Right ventricle myocardium superior (tissue), 1 donor: ENCODE measurements at regions of chr20 and their contacts with region 1.

Region 1: DNA sequence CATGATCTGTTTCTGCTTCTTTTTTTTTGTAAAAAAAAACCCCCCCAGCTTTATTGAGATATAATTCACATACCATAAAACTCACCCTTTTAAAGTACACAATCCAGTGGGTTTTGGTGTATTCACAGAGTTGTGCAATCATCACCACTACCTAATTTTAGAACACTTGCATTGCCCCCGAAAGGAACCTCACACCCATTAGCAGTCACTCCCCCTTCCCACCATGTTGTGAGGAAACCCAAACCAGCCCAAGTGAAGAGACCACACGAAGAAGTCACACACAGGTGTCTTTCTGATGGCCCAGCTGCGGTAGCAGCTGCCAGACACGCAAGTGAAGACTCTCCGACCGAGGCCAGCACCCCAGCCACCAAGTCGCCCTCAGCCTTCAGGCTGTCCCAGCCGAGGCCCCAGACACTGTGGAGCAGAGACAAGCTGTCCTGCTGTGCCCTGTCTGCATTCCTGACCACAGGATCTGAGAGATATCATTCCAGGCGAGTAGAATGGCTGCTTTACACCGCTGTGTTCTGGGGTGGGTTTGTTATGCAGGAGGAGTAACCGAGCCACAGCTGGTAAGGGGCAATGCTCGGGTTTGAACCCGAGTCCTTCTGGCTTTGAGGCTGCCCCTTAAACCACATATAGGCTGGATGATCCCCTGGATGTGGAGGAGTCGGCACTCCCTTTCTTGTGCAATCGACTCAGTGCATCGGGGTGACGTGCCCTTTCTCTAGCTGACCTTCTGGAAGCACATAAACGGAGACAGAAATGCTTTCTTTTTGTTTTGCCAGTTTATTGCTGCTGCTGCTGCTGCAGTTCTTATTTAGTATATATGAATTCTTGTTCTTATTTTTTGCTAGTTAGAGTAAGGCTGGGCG is 59.1 kb upstream of the PTPN1 start:
- DNase-seq: peak; percentile 57
- ATAC-seq: peak; percentile 74

Region 2: GRCh38 chr20:50308513-50309279 is 142.4 kb before region 1 on chr20:
- intact Hi-C with region 1: loop called (anchors 10 kb)
- DNase-seq: peak; percentile 94
- ATAC-seq: peak; percentile 72

Region 3: DNA sequence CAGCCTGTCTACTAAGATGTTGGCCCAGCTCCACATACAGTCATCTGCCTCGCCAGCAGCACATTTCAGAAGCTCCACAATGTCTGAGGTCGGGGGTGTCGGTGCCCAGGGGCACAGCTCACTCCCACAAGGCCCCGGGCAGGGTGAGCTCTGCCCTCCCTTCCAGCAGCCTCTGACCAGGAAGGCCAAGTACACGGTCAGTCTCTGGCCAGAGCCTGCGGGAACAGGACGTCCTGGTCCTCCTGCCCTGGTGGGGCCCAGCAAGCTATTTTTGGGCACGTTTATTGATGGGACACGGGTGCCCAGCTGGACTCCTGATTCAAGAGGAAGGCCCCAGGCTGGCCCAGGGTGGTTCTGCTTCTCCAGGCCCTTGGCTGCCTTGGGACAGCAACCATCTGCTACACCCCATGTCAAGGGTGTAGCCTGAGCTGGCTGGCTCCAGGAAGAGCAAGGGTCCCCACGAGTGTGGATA is 55.8 kb before region 1 on chr20:
- intact Hi-C with region 1: no loop called
- DNase-seq: peak; percentile 92
- ATAC-seq: peak; percentile 82

Region 4: DNA sequence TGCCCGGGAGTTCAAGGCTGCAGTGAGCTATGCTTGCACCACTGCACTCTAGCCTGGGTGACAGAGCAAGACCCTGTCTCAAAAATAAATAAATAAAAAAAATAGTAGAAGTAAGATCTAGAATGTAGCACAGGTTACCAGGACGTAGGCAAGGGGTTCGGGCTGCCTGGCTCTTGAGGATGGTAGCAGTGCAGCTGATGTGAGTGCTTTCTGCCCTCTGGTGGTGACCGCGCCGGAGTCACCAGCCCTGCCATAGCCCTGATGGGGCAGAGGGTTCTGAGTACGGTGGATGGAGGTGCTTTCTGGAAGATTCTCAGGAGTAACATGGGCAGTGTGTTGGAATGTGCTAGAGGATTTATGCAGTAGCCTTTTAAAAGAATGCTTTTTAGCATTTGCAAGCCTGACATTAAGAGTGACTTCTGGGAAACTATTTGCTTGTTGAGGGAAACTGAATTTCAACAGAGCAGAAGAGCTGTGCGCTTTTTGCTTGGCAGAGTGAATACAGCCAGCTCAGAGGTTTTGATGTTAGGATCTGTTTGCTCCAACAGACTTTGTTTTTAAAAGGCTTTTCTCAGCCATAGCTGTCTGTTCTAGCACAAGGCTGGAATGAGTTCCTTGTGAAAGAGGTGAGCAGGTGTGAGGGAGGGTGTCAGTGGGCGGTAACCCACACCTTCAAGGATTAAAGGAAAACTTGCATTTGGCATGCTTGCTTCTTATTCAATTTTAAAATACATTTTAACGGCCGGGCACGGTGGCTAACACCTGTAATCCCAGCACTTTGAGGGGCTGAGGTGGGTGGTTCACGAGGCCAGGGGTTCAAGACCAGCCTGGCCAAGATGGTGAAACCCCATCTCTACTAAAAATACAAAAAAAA is 125.0 kb after region 1 on chr20:
- intact Hi-C with region 1: no loop called
- DNase-seq: peak; percentile 82
- ATAC-seq: peak; percentile 64

Region 5: DNA sequence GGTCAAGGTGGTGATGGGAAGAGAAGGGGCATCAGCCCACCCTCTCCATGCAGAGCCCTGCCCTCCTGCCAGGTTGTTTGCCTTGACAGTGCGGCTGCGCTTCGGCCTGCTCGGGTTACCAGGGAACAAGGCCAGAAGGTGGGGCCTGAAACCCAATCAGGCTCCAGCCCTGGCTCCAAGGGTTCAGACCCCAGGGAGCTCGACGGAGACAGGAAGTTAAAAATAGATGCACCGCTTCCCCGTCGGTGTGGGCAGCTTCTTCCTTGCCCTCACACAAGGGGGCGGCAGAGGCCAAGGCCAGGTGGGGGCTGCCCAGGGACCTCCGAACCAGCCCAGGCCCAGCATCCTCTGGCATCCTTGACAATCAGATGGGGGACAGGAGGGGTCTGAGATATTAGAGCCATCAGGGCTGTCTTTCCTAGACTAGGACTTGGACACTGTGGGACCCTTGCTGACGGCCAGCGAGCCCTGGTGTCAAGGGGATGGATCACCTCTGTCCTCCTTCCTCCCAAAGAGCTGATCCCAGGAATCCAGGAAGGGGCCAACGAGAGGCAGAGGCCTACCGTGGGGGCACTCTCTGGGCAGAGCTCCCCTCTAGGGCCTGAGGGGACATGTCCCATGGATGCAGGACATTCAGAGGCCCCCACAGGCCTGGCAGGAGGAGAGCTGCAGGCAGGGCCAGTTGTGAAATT is 175.0 kb after region 1 on chr20:
- intact Hi-C with region 1: no loop called
- DNase-seq: peak; percentile 78
- ATAC-seq: peak; percentile 76